ENCODE measurements at regions of chr9 and their contacts with region 1.

Region 1: GRCh38 chr9:115013998-115014397 is 83.6 kb upstream of the TNFSF8 start:
- DNase-seq: no peak
- H3K4me3 ChIP-seq: no peak overlapping the region
- CTCF ChIP-seq: peak; percentile 67

Region 2: GRCh38 chr9:114405294-114406034 is 608.5 kb before region 1 on chr9:
- CTCF ChIA-PET with region 1: interaction called, 77 read pairs
- POLR2A ChIA-PET with region 1: no interaction called
- DNase-seq: no peak
- H3K4me3 ChIP-seq: no peak overlapping the region
- CTCF ChIP-seq: peak; percentile 82

Region 3: GRCh38 chr9:114671605-114672004 is 342.4 kb before region 1 on chr9:
- CTCF ChIA-PET with region 1: interaction called, 280 read pairs
- POLR2A ChIA-PET with region 1: no interaction called
- DNase-seq: no peak
- H3K4me3 ChIP-seq: no peak overlapping the region
- CTCF ChIP-seq: no peak

Region 4: GRCh38 chr9:114738581-114739316 is 275.2 kb before region 1 on chr9:
- CTCF ChIA-PET with region 1: interaction called, 55 read pairs
- POLR2A ChIA-PET with region 1: no interaction called
- DNase-seq: no peak
- H3K4me3 ChIP-seq: no peak overlapping the region
- CTCF ChIP-seq: peak; percentile 63

Region 5: DNA sequence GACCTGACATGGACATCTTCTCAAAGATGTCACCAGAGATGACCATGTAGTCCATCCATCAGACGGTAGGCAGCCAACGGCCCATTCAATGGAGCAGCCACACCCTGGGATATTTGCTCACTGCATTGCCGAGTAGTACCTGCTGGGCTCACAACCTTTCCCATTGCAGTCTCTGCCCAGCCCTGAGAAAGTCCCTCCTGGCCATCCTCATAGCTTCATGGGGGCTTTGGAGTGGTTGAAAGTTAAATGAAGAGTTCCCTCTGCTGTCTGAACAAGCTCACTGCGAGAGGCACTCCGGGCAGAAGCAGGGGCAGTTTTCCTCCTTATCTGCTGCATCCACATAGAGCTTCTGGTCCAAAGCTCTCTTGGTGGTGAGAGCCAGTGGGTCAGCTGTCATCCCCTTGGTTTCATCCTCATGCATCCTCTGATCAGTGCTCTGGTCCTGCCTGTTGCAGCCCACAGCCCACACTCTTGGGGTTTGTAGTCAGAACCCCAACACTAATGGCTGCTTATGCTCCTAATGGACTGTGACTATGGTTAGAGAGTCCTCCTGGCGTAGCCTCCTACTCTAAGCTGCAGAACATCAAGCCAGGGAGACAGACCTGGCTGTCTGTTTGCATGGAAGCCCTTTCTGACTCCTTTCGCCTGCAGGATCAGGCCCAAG is 107.0 kb before region 1 on chr9:
- CTCF ChIA-PET with region 1: interaction called, 98 read pairs
- POLR2A ChIA-PET with region 1: no interaction called
- DNase-seq: no peak
- H3K4me3 ChIP-seq: no peak overlapping the region
- CTCF ChIP-seq: peak; percentile 75

Region 6: GRCh38 chr9:115034769-115035168 is 20.8 kb after region 1 on chr9:
- CTCF ChIA-PET with region 1: interaction called, 19 read pairs
- POLR2A ChIA-PET with region 1: no interaction called
- DNase-seq: peak; percentile 73
- H3K4me3 ChIP-seq: no peak overlapping the region
- CTCF ChIP-seq: no peak

Region 7: DNA sequence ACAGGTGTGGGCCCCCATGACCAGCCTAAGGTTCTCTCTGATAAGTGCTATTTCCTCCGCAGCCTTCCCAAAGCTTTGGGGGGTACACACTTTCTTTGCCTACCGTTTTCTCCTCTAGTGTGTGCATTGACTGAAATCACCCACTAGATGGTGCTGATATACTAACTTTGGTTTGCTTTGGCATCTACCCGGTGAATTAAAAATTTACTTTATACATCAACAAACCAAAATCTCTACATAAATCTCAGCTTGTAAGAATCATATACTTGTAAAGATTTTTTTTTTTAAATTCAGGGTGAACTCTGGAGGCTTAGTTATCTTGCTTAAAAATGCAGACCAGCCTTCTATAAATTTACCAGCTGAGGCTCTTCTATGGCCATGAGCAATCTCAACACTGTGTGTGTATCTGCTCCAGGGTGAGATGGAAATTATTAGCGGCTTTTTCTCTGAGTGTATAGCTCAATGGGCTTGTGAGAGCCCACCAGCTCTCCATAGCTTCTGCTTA is 579.6 kb after region 1 on chr9:
- CTCF ChIA-PET with region 1: no interaction called
- POLR2A ChIA-PET with region 1: no interaction called
- DNase-seq: no peak
- H3K4me3 ChIP-seq: no peak overlapping the region
- CTCF ChIP-seq: peak; percentile 37

Measured in AG04449 (cell line).